Cardiac septum (tissue), 1 donor: ENCODE measurements at regions of chrX and their contacts with region 1.

Region 1: DNA sequence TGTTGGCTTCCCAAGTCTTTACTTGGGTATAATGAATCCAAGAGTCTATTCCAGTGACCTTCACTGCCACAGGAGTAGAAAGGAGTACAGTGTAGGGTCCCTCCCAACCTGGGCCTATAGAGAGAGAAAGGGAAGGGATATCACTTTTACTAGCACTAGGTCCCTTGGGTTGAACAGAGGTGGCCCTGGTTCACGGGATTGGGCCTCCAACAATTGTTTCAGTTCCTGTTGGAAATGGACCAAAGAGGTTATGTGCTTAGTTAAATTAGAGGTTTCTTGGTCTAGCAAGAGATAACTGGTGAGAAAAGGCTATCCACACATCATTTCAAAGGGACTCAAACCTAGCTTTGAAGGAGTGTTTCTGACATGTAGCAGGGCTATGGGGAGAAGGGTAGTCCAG is 57.1 kb upstream of the MED14 start:
- DNase-seq: no peak

Region 2: DNA sequence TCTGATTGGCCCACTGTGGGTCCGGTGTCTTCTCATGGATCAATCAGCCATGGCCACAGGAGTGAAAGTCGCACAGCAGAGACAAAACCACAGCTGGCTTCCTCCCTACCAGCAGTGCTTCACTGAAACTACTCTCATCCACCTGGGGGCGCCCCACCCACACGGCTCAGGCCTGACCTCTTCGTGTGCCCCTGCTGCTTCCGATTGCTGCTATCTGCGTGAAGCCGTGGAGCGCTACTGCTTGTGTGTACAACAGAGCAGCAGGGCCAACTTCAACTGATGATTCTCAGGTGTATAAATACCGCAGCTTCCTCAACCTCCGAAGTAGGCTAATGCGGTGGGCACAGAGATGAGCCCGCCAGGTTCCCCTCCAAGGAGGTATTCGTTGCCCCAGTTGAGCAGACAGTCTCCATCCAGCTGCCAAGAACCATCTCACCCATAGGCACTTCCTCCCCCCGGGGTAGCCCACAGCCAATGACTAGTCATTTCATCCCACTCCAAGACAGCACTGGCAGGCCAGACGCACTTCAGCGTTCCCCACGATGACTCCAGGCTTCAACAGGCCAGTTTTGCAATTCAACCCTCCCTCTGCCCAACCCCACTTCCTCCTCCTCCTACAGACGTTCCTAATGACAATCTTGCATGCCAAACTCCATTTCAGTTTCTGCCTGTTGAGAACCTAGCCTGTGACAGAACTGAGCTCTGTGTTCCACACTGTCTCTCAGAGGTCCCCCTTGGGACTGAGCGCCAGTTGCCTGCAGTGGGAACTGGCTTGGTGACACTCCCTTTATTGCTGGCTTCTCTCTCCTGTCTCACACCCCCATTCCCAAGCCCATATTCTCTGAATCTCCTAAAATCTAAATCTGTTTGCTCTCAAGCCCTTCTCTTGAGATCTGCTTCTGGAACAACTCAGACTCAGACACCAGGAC is 253.0 kb before region 1 on chrX:
- intact Hi-C with region 1: loop called (anchors 10 kb)
- DNase-seq: no peak

Region 3: GRCh38 chrX:40735325-40736169 is 56.9 kb before region 1 on chrX and contains the start of gene MED14:
- intact Hi-C with region 1: loop called (anchors 5 kb)
- DNase-seq: peak; percentile 95
- total RNA-seq, gene MED14: 38.3 TPM

Region 4: DNA sequence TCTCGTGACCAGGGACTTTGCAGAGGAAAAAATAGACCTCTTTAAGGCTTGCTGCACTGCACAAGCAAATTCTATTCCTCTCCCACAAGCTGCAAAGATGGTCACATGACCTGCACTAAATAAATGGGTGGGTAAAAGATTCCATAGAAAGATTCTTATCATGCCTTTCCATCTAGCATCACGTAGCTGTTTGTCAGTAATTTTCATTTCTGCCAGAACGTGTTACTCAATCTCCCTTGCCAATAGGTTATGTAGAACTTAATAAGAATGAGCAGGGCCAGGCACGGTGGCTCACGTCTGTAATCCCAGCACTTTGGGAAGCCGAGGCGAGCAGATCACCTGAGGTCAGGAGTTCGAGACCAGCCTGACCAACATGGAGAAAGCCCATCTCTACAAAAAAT is 235.0 kb after region 1 on chrX:
- intact Hi-C with region 1: no loop called
- DNase-seq: no peak

Region 5: DNA sequence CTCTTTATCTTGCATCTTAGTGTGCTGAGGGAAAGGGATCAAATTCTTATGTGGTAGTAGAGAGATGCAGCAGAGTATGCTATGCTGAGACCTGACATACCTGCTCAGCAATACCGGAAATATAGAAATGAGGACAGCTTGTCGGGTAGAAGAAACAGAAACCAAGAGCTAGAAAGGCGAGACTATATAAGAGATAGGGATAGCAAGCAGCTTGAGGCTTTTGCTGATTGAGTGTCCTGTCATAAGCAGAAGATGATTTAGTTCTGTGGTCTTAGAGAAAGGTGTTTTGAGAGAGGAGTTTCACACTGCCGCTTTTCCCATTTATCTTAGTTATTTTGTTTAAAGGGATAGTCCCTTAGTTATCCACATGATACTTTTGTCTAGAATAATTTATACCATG is 324.5 kb after region 1 on chrX:
- intact Hi-C with region 1: loop called (anchors 10 kb)
- DNase-seq: no peak